GM12878 (cell line): ENCODE measurements at regions of chr22 and their contacts with region 1.

Region 1: GRCh38 chr22:40024201-40025061 is 29.7 kb downstream of the FAM83F start:
- DNase-seq: no peak
- ATAC-seq: peak; percentile 92
- H3K4me3 ChIP-seq: no peak overlapping the region
- H3K27ac ChIP-seq: no peak overlapping the region
- H3K4me1 ChIP-seq: no peaks in the 10 kb centered on the region
- H3K27me3 ChIP-seq: peaks cover 0 to 1% of the 10 kb centered on the region in 2 experiments; a peak in 2 of 4 replicates
- CTCF ChIP-seq: peak; percentile 90 to 97 (median 92); a peak in 5 of 6 replicates
- EP300 ChIP-seq: no peak; a peak in 1 of 4 replicates
- POLR2A ChIP-seq: no peak
- RAD21 ChIP-seq: peak; percentile 95

Region 2: GRCh38 chr22:39543095-39543494 is 481.3 kb before region 1 on chr22:
- CTCF ChIA-PET with region 1: interaction called, 157 read pairs
- POLR2A ChIA-PET with region 1: interaction called, 3 read pairs
- RAD21 ChIA-PET with region 1: interaction called, 36 read pairs
- SMC1A ChIA-PET with region 1: interaction called, 17 read pairs
- in situ Hi-C with region 1: loop called (anchors 5 kb)
- intact Hi-C with region 1: loop called (anchors 5 kb)
- DNase-seq: no peak
- ATAC-seq: peak; percentile 81
- H3K4me3 ChIP-seq: no peak overlapping the region
- H3K27ac ChIP-seq: no peak overlapping the region
- H3K4me1 ChIP-seq: no peaks in the 10 kb centered on the region
- H3K27me3 ChIP-seq: peaks cover 0 to 3% of the 10 kb centered on the region in 2 experiments; a peak in 1 of 4 replicates
- CTCF ChIP-seq: peak; percentile 50 to 60 (median 51); a peak in 4 of 6 replicates
- EP300 ChIP-seq: no peak
- POLR2A ChIP-seq: no peak
- RAD21 ChIP-seq: peak; percentile 49

Region 3: GRCh38 chr22:39900306-39901227 is 123.9 kb before region 1 on chr22 and contains the start of gene GRAP2:
- CTCF ChIA-PET with region 1: interaction called, 17 read pairs
- POLR2A ChIA-PET with region 1: no interaction called
- RAD21 ChIA-PET with region 1: interaction called, 16 read pairs
- SMC1A ChIA-PET with region 1: interaction called, 17 read pairs
- in situ Hi-C with region 1: no loop called
- intact Hi-C with region 1: no loop called
- DNase-seq: peak; percentile 94
- ATAC-seq: peak; percentile 84
- H3K4me3 ChIP-seq: peak within 1 kb of the TSS; percentile 89
- H3K27ac ChIP-seq: peak within 1 kb of the TSS; percentile 87
- H3K4me1 ChIP-seq: peaks cover 24% of the 10 kb centered on the region
- H3K27me3 ChIP-seq: no peaks in the 10 kb centered on the region
- CTCF ChIP-seq: no peak
- EP300 ChIP-seq: peak; percentile 30 to 49; a peak in 1 of 4 replicates
- POLR2A ChIP-seq: peak; percentile 73
- RAD21 ChIP-seq: 0 out of 2 replicates have a peak, but pooled peaks have one; percentile 5
- polyA plus RNA-seq, gene GRAP2: 3.3 to 5.4 TPM

Region 4: DNA sequence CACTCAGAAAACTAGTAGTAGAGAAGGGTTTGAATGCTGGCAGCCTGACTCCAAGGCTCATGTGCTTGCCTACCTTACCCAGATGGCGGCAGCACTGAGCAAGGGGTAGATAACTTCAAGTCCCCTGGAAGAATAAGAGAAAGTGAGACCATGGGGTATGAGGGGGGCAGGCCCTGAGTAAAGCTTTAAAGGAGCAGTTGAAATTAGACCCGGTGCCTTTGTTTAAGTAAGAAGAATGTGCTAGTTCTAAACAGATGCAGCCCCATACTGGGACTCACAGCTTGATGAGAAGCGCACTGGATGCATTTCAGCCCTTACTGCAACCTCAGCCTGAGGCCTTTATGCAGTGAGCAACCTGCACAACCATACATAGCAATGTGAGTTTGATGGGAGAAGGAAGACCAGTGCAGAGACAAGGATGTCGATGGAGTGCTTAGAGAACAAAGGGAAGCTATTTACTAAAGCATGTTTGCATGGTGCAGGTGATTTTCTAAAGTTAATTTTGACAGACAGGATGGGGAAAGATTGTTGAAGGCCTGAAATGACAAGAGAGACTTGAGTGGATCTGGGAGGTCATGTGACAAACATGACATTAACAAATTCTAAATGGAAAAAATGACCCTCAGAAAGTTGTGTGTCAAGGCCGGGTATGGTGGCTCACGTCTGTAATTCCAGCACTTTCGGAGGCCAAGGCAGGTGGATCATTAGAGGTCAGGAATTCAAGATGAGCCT is 91.3 kb before region 1 on chr22:
- CTCF ChIA-PET with region 1: interaction called, 25 read pairs
- POLR2A ChIA-PET with region 1: no interaction called
- RAD21 ChIA-PET with region 1: interaction called, 34 read pairs
- SMC1A ChIA-PET with region 1: interaction called, 23 read pairs
- in situ Hi-C with region 1: no loop called
- intact Hi-C with region 1: loop called (anchors 10 kb)
- DNase-seq: no peak
- ATAC-seq: peak; percentile 82
- H3K4me3 ChIP-seq: no peak overlapping the region
- H3K27ac ChIP-seq: no peak overlapping the region
- H3K4me1 ChIP-seq: peaks cover 37% of the 10 kb centered on the region
- H3K27me3 ChIP-seq: no peaks in the 10 kb centered on the region
- CTCF ChIP-seq: peak; percentile 56 to 91 (median 84)
- EP300 ChIP-seq: no peak
- POLR2A ChIP-seq: no peak
- RAD21 ChIP-seq: peak; percentile 63

Region 5: GRCh38 chr22:39991159-39991860 is 33.1 kb before region 1 on chr22:
- CTCF ChIA-PET with region 1: interaction called, 10 read pairs
- POLR2A ChIA-PET with region 1: no interaction called
- RAD21 ChIA-PET with region 1: interaction called, 3 read pairs
- SMC1A ChIA-PET with region 1: no interaction called
- in situ Hi-C with region 1: no loop called
- intact Hi-C with region 1: no loop called
- DNase-seq: no peak
- ATAC-seq: no peak
- H3K4me3 ChIP-seq: no peak overlapping the region
- H3K27ac ChIP-seq: no peak overlapping the region
- H3K4me1 ChIP-seq: no peaks in the 10 kb centered on the region; the same call in 1 of the 2 replicates
- H3K27me3 ChIP-seq: peaks cover 3 to 6% of the 10 kb centered on the region in 2 experiments
- CTCF ChIP-seq: no peak
- EP300 ChIP-seq: no peak
- POLR2A ChIP-seq: no peak
- RAD21 ChIP-seq: no peak

Region 6: DNA sequence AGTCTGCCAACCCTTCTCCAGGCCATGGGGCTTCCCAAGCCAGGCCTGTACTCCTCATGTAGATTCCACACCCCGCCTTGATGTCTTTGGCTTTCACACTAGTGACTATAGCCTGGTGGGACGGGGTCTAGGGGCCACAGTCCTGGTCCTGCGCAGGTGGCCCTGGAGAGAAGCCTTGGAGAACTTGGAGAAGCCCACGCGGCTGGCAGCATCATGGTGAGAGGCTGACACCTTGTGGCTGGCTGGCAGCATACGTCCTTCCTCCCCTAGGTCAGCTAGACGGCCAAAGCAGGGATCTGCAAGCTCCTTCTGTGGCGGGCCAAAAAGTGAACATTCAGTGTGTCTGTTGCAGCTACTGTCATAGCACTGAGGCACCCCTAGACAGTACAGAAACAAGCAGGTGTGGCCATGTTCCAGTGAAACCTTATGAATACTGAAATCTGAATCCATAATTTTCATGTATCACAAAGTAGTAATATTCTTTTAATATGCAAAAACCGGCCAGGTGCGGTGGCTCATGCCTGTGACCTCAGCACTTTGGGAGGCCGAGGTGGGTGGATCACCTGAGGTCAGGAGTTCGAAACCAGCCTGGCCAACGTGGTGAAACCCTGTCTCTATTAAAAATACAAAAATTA is 12.3 kb after region 1 on chr22:
- CTCF ChIA-PET with region 1: interaction called, 57 read pairs
- POLR2A ChIA-PET with region 1: no interaction called
- RAD21 ChIA-PET with region 1: interaction called, 16 read pairs
- SMC1A ChIA-PET with region 1: interaction called, 18 read pairs
- in situ Hi-C with region 1: no loop called
- intact Hi-C with region 1: no loop called
- DNase-seq: no peak
- ATAC-seq: peak; percentile 97
- H3K4me3 ChIP-seq: no peak overlapping the region
- H3K27ac ChIP-seq: no peak overlapping the region
- H3K4me1 ChIP-seq: no peaks in the 10 kb centered on the region
- H3K27me3 ChIP-seq: peaks cover 6 to 8% of the 10 kb centered on the region in 2 experiments
- CTCF ChIP-seq: peak; percentile 77 to 91 (median 88)
- EP300 ChIP-seq: no peak
- POLR2A ChIP-seq: no peak
- RAD21 ChIP-seq: peak; percentile 86

Region 7: DNA sequence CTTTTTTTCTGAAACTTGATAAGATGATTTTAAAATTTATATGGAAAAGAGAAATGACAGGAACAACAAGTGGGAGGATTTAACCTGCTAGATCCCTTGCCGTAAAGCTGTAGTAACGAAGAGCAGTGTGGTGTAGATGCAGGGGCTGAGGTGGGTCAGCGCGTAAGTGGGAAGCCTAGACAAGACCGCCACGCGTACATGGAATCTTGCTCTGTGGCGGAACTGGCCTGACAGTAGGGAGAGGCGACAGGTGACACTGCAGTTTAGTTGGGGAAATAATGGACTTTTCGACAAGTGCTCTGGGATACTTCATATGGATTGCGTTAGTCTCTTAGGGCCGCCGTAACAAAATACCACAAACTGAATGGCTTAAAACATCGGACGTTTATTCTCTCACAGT is 182.1 kb after region 1 on chr22:
- CTCF ChIA-PET with region 1: no interaction called
- POLR2A ChIA-PET with region 1: no interaction called
- RAD21 ChIA-PET with region 1: no interaction called
- SMC1A ChIA-PET with region 1: no interaction called
- in situ Hi-C with region 1: no loop called
- intact Hi-C with region 1: no loop called
- DNase-seq: no peak
- ATAC-seq: no peak
- H3K4me3 ChIP-seq: no peak overlapping the region
- H3K27ac ChIP-seq: no peak overlapping the region
- H3K4me1 ChIP-seq: peaks cover 49% of the 10 kb centered on the region
- H3K27me3 ChIP-seq: no peaks in the 10 kb centered on the region
- CTCF ChIP-seq: no peak
- EP300 ChIP-seq: no peak
- POLR2A ChIP-seq: no peak
- RAD21 ChIP-seq: no peak